MCF 10A (cell line): ENCODE measurements at regions of chr22 and their contacts with region 1.

Region 1: DNA sequence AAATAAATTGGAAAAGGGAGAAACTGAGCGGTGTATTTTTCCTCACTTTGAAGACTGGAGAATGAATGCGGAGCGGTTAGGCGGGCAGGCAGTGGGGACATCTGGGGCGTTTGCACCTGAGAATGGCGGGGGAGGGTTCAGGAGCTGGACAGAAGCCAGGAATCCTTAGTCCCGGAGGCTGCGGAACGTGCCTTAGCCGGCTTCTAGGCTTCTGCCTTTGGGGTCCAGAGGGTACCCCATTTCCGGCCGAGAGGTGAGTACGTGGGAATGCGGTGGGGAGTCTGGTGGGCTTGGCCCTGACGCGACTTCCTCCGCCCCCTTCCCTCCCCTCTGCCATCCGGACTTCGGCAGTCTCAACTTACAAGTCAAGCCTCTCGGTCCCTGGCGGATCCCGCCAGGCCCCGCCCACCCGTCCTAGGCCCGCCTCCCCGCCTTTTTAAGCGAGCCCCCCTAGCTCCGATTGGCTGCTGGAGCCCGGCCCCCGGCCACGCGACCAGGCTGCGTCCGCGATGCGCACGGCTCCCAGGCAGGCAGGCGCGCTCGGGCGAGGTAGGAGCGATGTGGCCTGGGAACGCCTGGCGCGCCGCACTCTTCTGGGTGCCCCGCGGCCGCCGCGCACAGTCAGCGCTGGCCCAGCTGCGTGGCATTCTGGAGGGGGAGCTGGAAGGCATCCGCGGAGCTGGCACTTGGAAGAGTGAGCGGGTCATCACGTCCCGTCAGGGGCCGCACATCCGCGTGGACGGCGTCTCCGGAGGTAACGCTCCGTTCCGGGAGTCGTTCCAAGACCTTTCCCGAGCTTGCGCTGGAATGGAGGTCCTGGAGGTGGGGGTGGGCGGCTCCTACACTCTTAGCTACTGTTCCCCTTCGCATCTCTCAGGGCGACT is at the start of gene GCAT:
- DNase-seq: peak; percentile 96
- H3K4me3 Mint-ChIP-seq: peak within 1 kb of the TSS; percentile 78
- H3K27ac Mint-ChIP-seq: peak within 1 kb of the TSS; percentile 59
- H3K4me1 Mint-ChIP-seq: peaks cover 13% of the 10 kb centered on the region
- H3K27me3 Mint-ChIP-seq: no peaks in the 10 kb centered on the region
- CTCF ChIP-seq: no peak
- total RNA-seq, gene GCAT: 21.5 and 32.8 TPM in 2 replicates

Region 2: DNA sequence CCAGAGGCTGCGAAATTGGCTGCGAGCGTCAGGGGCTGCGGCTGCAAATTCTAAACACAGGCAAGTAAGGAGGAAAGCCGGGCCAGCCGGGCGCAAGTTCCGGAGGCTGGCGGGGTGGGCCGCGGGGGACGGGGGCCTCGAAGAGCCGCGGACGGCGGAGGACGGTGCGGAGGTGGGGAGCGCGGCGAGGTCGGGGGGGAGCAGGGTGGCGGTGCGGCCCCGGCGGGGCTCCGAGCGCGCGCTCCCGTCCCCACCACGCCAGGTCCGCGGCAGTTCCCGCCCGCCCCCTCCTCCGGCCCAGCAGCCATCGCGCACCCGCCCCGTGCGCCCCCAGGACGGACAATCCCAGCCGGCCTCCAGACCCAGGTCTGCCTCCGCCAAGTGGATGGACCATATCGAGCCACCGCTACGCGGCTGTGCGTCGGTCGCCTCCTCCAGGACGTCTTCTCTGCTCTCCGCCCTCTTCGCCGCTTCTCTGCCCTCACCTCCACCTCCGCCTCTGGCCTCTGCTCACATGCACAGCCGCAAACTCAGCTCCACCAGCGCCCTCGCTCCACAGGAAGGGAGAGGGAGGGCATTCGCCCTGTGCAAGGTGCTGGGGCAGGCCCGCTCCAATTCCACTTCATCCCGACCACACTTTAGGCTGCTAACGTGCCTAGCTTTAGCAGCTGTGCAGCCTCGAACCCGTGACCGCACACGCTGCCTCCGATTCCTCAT is 387.5 kb before region 1 on chr22:
- CTCF ChIA-PET with region 1: no interaction called
- POLR2A ChIA-PET with region 1: no interaction called
- intact Hi-C with region 1: no loop called
- DNase-seq: peak; percentile 52
- H3K4me3 Mint-ChIP-seq: peak overlapping the region; percentile 71
- H3K27ac Mint-ChIP-seq: no peak overlapping the region
- H3K4me1 Mint-ChIP-seq: peaks cover 30% of the 10 kb centered on the region
- H3K27me3 Mint-ChIP-seq: no peaks in the 10 kb centered on the region
- CTCF ChIP-seq: no peak

Region 3: GRCh38 chr22:37608477-37609239 is 199.0 kb before region 1 on chr22 and contains the start of gene GGA1:
- CTCF ChIA-PET with region 1: no interaction called
- POLR2A ChIA-PET with region 1: interaction called, 22 read pairs
- intact Hi-C with region 1: no loop called
- DNase-seq: peak; percentile 96
- H3K4me3 Mint-ChIP-seq: peak within 1 kb of the TSS; percentile 85
- H3K27ac Mint-ChIP-seq: peak within 1 kb of the TSS; percentile 98
- H3K4me1 Mint-ChIP-seq: peaks cover 12% of the 10 kb centered on the region
- H3K27me3 Mint-ChIP-seq: no peaks in the 10 kb centered on the region
- CTCF ChIP-seq: no peak
- total RNA-seq, gene GGA1: 52.7 and 59.1 TPM in 2 replicates

Region 4: DNA sequence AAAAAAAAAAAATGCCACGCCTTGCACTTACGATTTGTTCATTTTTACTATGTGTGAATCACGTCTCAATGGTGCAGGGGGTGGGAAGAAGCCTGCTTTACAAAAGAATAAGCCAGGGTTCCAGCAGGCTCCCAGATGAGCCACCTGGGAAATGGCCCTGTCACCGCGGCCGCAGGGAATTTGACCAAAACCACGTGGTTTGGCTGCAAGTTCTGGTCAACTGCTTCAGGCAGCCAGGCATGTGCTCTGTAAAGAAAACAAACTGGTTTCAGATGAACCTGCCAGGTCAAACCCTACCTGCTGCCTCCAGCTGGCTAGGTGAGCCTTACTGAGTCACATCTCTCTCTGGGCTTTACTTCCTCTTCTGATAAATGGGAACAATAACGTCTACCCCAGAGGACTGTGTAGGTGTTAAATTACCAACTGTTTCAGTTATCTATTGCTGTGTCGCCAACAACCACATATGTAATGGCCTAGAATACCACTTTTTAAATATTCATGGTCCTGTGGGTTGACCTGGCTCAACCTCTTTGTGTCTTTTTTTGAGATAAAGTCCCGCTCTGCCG is 30.4 kb before region 1 on chr22:
- CTCF ChIA-PET with region 1: no interaction called
- POLR2A ChIA-PET with region 1: interaction called, 14 read pairs
- intact Hi-C with region 1: no loop called
- DNase-seq: peak; percentile 97
- H3K4me3 Mint-ChIP-seq: peak overlapping the region; percentile 51
- H3K27ac Mint-ChIP-seq: peak overlapping the region; percentile 76
- H3K4me1 Mint-ChIP-seq: peaks cover 20% of the 10 kb centered on the region
- H3K27me3 Mint-ChIP-seq: no peaks in the 10 kb centered on the region
- CTCF ChIP-seq: no peak

Region 5: DNA sequence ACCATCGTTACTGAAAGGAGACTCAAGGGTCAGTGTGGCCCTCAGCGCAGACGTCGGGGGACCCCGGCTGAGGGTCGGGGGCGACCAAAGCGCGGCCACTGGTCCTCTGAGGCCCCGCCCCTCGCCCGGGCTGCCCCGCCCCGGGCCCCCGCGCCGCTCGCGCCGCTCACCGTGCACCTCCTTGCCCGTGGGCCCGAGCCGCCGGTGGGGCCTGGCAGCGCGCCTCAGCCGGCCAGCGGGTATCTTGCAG is 36.0 kb after region 1 on chr22:
- CTCF ChIA-PET with region 1: interaction called, 3 read pairs
- POLR2A ChIA-PET with region 1: interaction called, 39 read pairs
- intact Hi-C with region 1: no loop called
- DNase-seq: peak; percentile 17
- H3K4me3 Mint-ChIP-seq: peak overlapping the region; percentile 82
- H3K27ac Mint-ChIP-seq: no peak overlapping the region
- H3K4me1 Mint-ChIP-seq: peaks cover 5% of the 10 kb centered on the region
- H3K27me3 Mint-ChIP-seq: no peaks in the 10 kb centered on the region
- CTCF ChIP-seq: no peak

Region 6: DNA sequence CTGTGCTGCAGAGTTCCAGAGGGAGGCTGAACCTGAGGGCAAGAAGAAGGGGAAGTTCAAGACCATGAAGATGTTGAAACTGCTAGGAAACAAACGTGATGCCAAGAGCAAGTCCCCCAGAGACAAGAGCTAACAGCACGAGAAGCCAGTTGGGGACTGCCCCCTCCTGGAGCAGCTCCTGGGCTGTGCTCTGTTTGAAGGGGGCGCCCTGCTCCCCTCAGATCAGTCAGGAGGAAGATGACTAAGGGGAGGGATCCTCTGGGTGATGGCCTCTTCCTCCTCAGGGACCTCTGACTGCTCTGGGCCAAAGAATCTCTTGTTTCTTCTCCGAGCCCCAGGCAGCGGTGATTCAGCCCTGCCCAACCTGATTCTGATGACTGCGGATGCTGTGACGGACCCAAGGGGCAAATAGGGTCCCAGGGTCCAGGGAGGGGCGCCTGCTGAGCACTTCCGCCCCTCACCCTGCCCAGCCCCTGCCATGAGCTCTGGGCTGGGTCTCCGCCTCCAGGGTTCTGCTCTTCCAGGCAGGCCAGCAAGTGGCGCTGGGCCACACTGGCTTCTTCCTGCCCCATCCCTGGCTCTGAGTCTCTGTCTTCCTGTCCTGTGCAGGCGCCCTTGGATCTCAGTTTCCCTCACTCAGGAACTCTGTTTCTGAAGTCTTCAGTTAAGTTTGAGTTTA is 133.2 kb after region 1 on chr22:
- CTCF ChIA-PET with region 1: no interaction called
- POLR2A ChIA-PET with region 1: no interaction called
- intact Hi-C with region 1: no loop called
- DNase-seq: no peak
- H3K4me3 Mint-ChIP-seq: no peak overlapping the region
- H3K27ac Mint-ChIP-seq: no peak overlapping the region
- H3K4me1 Mint-ChIP-seq: no peaks in the 10 kb centered on the region
- H3K27me3 Mint-ChIP-seq: no peaks in the 10 kb centered on the region
- CTCF ChIP-seq: no peak

Region 7: DNA sequence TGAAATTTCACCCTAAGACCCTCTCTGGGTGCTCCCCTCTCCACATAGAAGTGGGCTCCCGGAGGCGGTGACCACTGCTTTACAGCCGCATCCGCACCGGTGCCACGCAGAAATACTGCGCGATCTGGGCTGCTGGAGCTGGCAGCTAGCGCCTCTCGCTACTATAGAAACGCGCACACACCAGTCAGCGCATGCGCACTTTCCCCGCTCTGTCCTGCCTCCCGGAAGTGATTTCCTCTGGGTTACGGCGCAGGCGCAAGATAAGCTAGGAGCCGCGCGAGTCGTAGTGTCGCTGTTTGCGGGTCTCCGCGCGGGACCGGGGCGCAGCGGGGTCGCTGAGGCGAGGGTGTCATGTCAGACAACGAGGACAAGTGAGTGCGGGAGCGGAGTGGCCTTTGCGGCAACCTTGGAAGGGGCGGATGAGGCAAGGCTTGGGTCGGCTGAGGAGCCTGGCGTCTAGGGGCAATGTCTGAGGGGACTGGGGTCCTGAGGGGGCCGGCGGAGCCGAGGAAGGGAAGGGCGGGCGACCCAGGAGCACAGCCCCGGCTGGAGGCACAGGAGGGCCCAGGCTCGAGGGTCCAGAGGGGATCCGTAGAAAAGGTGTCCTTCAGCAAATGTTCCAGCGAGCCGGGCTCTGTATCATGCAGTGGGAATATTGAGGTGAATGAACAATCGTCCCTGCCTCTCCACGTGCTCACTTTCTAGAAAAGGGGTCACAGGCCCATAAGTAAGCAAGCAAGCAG is 146.0 kb after region 1 on chr22 and contains the starts of genes C22orf23 and POLR2F:
- CTCF ChIA-PET with region 1: no interaction called
- POLR2A ChIA-PET with region 1: interaction called, 11 read pairs
- intact Hi-C with region 1: no loop called
- DNase-seq: peak; percentile 96
- H3K4me3 Mint-ChIP-seq: peak within 1 kb of the TSS; percentile 76
- H3K27ac Mint-ChIP-seq: peak within 1 kb of the TSS; percentile 84
- H3K4me1 Mint-ChIP-seq: peaks cover 18% of the 10 kb centered on the region
- H3K27me3 Mint-ChIP-seq: no peaks in the 10 kb centered on the region
- CTCF ChIP-seq: no peak
- total RNA-seq, gene C22orf23: not detected in 2 replicates
- total RNA-seq, gene POLR2F: 87.5 and 97.6 TPM in 2 replicates